ENCODE measurements at regions of chr20 and their contacts with region 1.

Region 1: GRCh38 chr20:33803921-33804337 is 7.2 kb upstream of the CHMP4B start:
- DNase-seq: peak in 1 of 2 experiments; percentile 72
- H3K4me3 ChIP-seq: no peak overlapping the region
- H3K27ac ChIP-seq: peak overlapping the region; percentile 77
- H3K4me1 ChIP-seq: peaks cover 11% of the 10 kb centered on the region
- H3K27me3 ChIP-seq: no peaks in the 10 kb centered on the region
- CTCF ChIP-seq: no peak

Region 2: GRCh38 chr20:33731693-33732165 is 72.2 kb before region 1 on chr20 and contains the start of gene ZNF341:
- CTCF ChIA-PET with region 1: no interaction called
- POLR2A ChIA-PET with region 1: no interaction called
- intact Hi-C with region 1: no loop called
- DNase-seq: peak in 1 of 2 experiments; percentile 69
- H3K4me3 ChIP-seq: peak within 1 kb of the TSS; percentile 64
- H3K27ac ChIP-seq: peak within 1 kb of the TSS; percentile 94
- H3K4me1 ChIP-seq: peaks cover 59% of the 10 kb centered on the region
- H3K27me3 ChIP-seq: no peaks in the 10 kb centered on the region
- CTCF ChIP-seq: peak; percentile 83
- total RNA-seq, gene ZNF341: 5.2 and 5.6 TPM in 2 replicates

Region 3: GRCh38 chr20:33909331-33909921 is 105.5 kb after region 1 on chr20:
- CTCF ChIA-PET with region 1: no interaction called
- POLR2A ChIA-PET with region 1: no interaction called
- intact Hi-C with region 1: loop called (anchors 1 kb)
- DNase-seq: peak; percentile 68 to 94
- H3K4me3 ChIP-seq: no peak overlapping the region
- H3K27ac ChIP-seq: peak overlapping the region; percentile 56
- H3K4me1 ChIP-seq: peaks cover 35% of the 10 kb centered on the region
- H3K27me3 ChIP-seq: no peaks in the 10 kb centered on the region
- CTCF ChIP-seq: no peak

Measured in PC-9 (cell line).